ENCODE measurements at regions of chr5 and their contacts with region 1.

Region 1: GRCh38 chr5:150560401-150561193 is 52.7 kb downstream of the NDST1 start:
- DNase-seq: peak; percentile 91
- ATAC-seq: peak; percentile 82
- H3K4me3 Mint-ChIP-seq: no peak overlapping the region
- H3K27ac Mint-ChIP-seq: peak overlapping the region; percentile 86
- H3K4me1 Mint-ChIP-seq: peaks cover 15% of the 10 kb centered on the region
- H3K27me3 Mint-ChIP-seq: no peaks in the 10 kb centered on the region
- CTCF ChIP-seq: peak; percentile 93

Region 2: GRCh38 chr5:150458819-150459557 is 101.6 kb before region 1 on chr5:
- CTCF ChIA-PET with region 1: interaction called, 100 read pairs
- POLR2A ChIA-PET with region 1: interaction called, 14 read pairs
- DNase-seq: peak; percentile 91
- ATAC-seq: peak; percentile 67
- H3K4me3 Mint-ChIP-seq: peak overlapping the region; percentile 15; the same call in 1 of the 2 replicates
- H3K27ac Mint-ChIP-seq: no peak overlapping the region
- H3K4me1 Mint-ChIP-seq: peaks cover 43% of the 10 kb centered on the region
- H3K27me3 Mint-ChIP-seq: no peaks in the 10 kb centered on the region
- CTCF ChIP-seq: peak; percentile 87

Region 3: GRCh38 chr5:150615141-150615699 is 54.6 kb after region 1 on chr5:
- CTCF ChIA-PET with region 1: interaction called, 10 read pairs
- POLR2A ChIA-PET with region 1: no interaction called
- DNase-seq: no peak
- ATAC-seq: no peak
- H3K4me3 Mint-ChIP-seq: no peak overlapping the region
- H3K27ac Mint-ChIP-seq: no peak overlapping the region
- H3K4me1 Mint-ChIP-seq: peaks cover 15% of the 10 kb centered on the region
- H3K27me3 Mint-ChIP-seq: no peaks in the 10 kb centered on the region
- CTCF ChIP-seq: no peak

Region 4: DNA sequence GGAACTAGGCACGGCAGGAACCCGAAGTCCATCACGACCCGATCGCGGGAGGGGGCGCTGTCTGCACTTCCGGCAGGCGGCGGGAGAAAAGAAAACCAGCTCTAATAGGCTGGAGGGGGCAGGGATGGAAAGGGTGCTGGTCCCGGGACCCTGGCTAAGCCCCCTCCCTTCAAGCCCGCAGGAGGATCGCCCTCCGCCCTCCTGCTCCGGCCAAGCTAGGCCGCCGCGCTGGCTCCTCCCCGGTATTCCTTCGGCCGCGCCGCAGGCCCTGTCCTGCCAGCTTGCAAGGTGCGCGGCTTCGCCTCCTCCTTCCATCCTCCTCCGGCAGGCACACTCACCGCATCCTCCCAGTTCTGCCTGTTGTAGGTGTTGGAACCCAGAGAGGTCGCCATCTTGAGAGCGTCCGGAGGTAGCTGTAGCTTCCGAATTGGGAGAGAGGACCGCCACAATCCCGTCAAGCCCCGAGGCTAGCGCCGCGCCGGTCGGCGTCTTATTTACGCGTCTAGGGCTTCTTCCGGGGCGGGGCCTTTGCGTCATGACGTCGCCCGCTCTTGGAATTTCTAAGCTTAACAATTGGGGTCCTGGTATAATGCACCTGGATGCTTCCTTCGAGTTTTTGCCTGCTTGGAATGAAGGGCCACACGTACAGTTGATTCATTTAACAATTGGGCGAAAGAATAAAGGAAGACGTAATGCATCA is 140.1 kb after region 1 on chr5 and contains the start of gene RBM22:
- CTCF ChIA-PET with region 1: interaction called, 26 read pairs
- POLR2A ChIA-PET with region 1: interaction called, 7 read pairs
- DNase-seq: peak; percentile 92
- ATAC-seq: peak; percentile 95
- H3K4me3 Mint-ChIP-seq: no peak within 1 kb of the TSS
- H3K27ac Mint-ChIP-seq: no peak within 1 kb of the TSS
- H3K4me1 Mint-ChIP-seq: peaks cover 2% of the 10 kb centered on the region; the same call in 1 of the 2 replicates
- H3K27me3 Mint-ChIP-seq: no peaks in the 10 kb centered on the region; the same call in 1 of the 2 replicates
- CTCF ChIP-seq: peak; percentile 44; the same call in 1 of the 2 replicates
- total RNA-seq, gene RBM22: 28.7 to 34.0 TPM (median 31.6 TPM) in 3 replicates

Region 5: GRCh38 chr5:150846654-150847333 is 286.2 kb after region 1 on chr5:
- CTCF ChIA-PET with region 1: interaction called, 31 read pairs
- POLR2A ChIA-PET with region 1: interaction called, 3 read pairs
- DNase-seq: peak; percentile 34
- ATAC-seq: peak; percentile 98
- H3K4me3 Mint-ChIP-seq: no peak overlapping the region
- H3K27ac Mint-ChIP-seq: no peak overlapping the region
- H3K4me1 Mint-ChIP-seq: peaks cover 8% of the 10 kb centered on the region; the same call in 1 of the 2 replicates
- H3K27me3 Mint-ChIP-seq: peaks cover 18% of the 10 kb centered on the region
- CTCF ChIP-seq: peak; percentile 57

Measured in WTC11 (cell line).